Stomach (tissue), 19 donors: ENCODE measurements at regions of chr11 and their contacts with region 1.

Region 1: GRCh38 chr11:59171508-59172322 is at the start of gene DTX4:
- DNase-seq: peak; percentile 96 to 97
- H3K4me3 ChIP-seq: peak within 1 kb of the TSS; percentile 70 to 88 (median 79)
- H3K27ac ChIP-seq: peak within 1 kb of the TSS; percentile 68 to 92 (median 86)
- H3K4me1 ChIP-seq: peaks cover 19 to 49% (median 47%) of the 10 kb centered on the region in 4 donors
- H3K27me3 ChIP-seq: peaks cover 0 to 12% (median 0%) of the 10 kb centered on the region in 3 donors
- CTCF ChIP-seq: peak in 6 of 7 experiments; percentile 68 to 98 (median 92)
- EP300 ChIP-seq: no peak
- POLR2A ChIP-seq: no peak
- total RNA-seq, gene DTX4: 16.8 to 58.0 (median 38.6) TPM

Region 2: DNA sequence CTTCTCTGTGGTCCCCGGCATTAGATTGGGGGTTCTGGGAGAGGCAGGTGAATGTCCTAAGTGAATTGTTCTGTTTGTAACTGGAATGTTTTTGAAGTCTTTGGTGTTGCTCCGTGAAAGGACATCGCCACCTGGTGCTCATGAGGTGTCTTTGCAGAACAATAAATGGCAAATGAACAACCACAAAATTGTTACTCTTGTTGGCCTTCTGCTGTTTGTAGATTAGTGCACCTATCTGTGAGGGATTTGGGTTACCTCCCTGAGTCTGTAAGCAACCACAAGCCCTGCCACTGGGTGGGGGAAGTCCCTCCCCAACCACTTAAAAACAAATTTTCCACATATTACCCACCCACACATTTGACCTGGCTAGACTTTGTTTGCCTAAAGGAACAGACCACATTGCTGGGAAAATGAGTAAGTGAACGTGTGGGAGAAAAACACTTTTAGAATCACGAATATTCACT is 36.3 kb after region 1 on chr11:
- intact Hi-C with region 1: loop called (anchors 5 kb)
- DNase-seq: peak; percentile 51 to 81
- H3K4me3 ChIP-seq: peak overlapping the region in 2 of 4 donors; percentile 3 to 33
- H3K27ac ChIP-seq: peak overlapping the region in 3 of 5 donors; percentile 40 to 55 (median 53)
- H3K4me1 ChIP-seq: peaks cover 11 to 30% (median 14%) of the 10 kb centered on the region in 4 donors
- H3K27me3 ChIP-seq: no peaks in the 10 kb centered on the region
- CTCF ChIP-seq: peak in 5 of 7 experiments; percentile 62 to 81 (median 65)
- EP300 ChIP-seq: no peak
- POLR2A ChIP-seq: no peak

Region 3: DNA sequence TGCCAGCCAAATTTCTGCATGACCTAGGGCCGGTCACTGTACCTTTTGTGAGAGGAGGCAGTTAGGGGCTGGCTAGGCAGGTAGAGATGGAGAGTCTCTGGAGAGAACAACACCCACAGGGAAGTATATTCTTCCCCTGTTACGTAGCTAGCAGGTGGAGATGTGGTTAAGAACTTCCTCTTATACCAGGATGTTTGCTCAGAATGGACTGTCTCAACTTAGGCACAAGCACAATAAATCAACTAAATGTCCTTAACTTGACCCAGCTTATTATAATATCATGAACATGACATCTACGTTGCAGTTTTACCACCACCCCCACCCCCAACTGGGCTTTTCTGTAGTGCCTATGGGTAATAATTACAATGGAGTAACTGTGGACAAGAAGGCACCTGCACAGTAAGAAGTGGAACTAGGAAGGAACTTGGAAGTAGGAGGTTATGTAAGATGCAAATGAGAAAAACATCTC is 101.7 kb after region 1 on chr11:
- intact Hi-C with region 1: no loop called
- DNase-seq: peak in 1 of 2 donors; percentile 67
- H3K4me3 ChIP-seq: no peak overlapping the region
- H3K27ac ChIP-seq: peak overlapping the region in 2 of 5 donors; percentile 54 to 57
- H3K4me1 ChIP-seq: peaks cover 0 to 17% (median 5%) of the 10 kb centered on the region in 4 donors
- H3K27me3 ChIP-seq: no peaks in the 10 kb centered on the region
- CTCF ChIP-seq: no peak
- EP300 ChIP-seq: no peak
- POLR2A ChIP-seq: no peak

Region 4: DNA sequence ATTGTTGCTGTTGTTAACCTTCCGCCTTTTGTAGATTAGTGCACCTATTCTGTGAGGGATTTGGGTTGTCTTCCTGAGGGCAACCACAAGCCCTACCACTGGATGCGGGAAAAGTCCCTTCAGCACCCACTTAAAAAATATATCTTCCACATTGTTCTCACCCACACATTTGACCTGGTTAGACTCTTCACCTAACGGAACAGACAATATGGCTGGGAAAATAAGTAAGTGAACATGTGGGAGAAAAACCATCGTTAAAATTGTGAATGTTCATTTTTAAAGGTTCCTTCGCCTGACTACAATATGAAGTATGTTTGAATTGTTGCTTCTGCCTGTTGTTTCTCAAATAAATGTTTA is 113.0 kb after region 1 on chr11:
- intact Hi-C with region 1: loop called (anchors 5 kb)
- DNase-seq: no peak
- H3K4me3 ChIP-seq: no peak overlapping the region
- H3K27ac ChIP-seq: no peak overlapping the region
- H3K4me1 ChIP-seq: peaks cover 0 to 7% (median 2%) of the 10 kb centered on the region in 4 donors
- H3K27me3 ChIP-seq: no peaks in the 10 kb centered on the region
- CTCF ChIP-seq: no peak
- EP300 ChIP-seq: no peak
- POLR2A ChIP-seq: no peak